Activated CD4-positive, alpha-beta memory T cell treated with anti-CD3 and anti-CD28 coated beads for 36 hours (primary cell): ENCODE measurements at regions of chr12 and their contacts with region 1.

Region 1: GRCh38 chr12:49842519-49843352 is at the start of gene BCDIN3D:
- DNase-seq: peak; percentile 97
- H3K4me3 Mint-ChIP-seq: peak within 1 kb of the TSS; percentile 90
- H3K27ac Mint-ChIP-seq: peak within 1 kb of the TSS; percentile 94
- H3K4me1 Mint-ChIP-seq: peaks cover 33% of the 10 kb centered on the region
- H3K27me3 Mint-ChIP-seq: no peaks in the 10 kb centered on the region
- total RNA-seq, gene BCDIN3D: 5.8 to 6.1 TPM

Region 2: GRCh38 chr12:49763006-49763591 is 79.6 kb before region 1 on chr12:
- CTCF ChIA-PET with region 1: interaction called, 48 read pairs
- POLR2A ChIA-PET with region 1: no interaction called
- intact Hi-C with region 1: loop called (anchors 5 kb)
- DNase-seq: peak; percentile 89
- H3K4me3 Mint-ChIP-seq: peak overlapping the region; percentile 49
- H3K27ac Mint-ChIP-seq: peak overlapping the region; percentile 95
- H3K4me1 Mint-ChIP-seq: peaks cover 59% of the 10 kb centered on the region
- H3K27me3 Mint-ChIP-seq: no peaks in the 10 kb centered on the region

Region 3: GRCh38 chr12:49828133-49829091 is 14.3 kb before region 1 on chr12 and contains the start of gene NCKAP5L:
- CTCF ChIA-PET with region 1: interaction called, 44 read pairs
- POLR2A ChIA-PET with region 1: interaction called, 10 read pairs
- intact Hi-C with region 1: loop called (anchors 1 kb)
- DNase-seq: peak; percentile 96
- H3K4me3 Mint-ChIP-seq: peak within 1 kb of the TSS; percentile 93
- H3K27ac Mint-ChIP-seq: peak within 1 kb of the TSS; percentile 88
- H3K4me1 Mint-ChIP-seq: peaks cover 20% of the 10 kb centered on the region
- H3K27me3 Mint-ChIP-seq: no peaks in the 10 kb centered on the region
- total RNA-seq, gene NCKAP5L: 2.9 to 3.0 TPM

Region 4: DNA sequence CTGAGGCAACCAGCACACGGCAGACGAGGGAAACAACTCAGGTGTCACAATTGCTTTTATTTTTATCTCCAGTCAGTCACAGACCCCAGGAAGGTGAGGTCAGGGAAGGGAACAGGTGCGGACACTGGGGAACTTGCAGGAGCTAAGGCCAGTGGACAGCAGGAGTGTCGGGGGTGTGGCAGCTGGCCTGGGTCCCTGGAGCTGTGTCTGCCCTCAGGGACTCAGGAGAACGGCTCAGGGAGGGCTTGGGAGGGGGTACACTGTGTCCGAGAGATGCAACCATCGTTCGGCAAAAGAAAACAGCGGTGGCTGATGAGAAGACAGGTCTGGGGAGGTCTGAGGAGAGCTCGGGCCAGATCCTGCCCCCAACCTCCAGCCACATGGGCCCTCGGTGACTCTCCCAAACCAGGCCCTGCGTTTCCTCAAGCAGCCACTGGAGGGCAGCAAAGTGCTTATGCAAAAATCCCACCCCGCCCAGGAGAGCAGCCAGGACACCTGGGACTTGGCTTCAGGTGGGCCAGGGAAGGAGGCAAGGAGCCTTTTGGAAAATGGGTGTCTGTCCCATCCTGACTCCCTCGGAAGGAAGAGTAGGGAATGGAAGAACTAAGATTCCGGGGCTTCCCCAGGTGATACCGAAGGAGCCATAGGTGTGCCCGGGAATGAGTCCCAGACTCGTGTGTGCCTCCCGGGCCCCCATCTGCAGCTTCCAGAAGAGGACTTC is 24.3 kb after region 1 on chr12:
- CTCF ChIA-PET with region 1: interaction called, 10 read pairs
- POLR2A ChIA-PET with region 1: no interaction called
- intact Hi-C with region 1: no loop called
- DNase-seq: peak; percentile 83
- H3K4me3 Mint-ChIP-seq: no peak overlapping the region
- H3K27ac Mint-ChIP-seq: no peak overlapping the region
- H3K4me1 Mint-ChIP-seq: no peaks in the 10 kb centered on the region
- H3K27me3 Mint-ChIP-seq: no peaks in the 10 kb centered on the region

Region 5: DNA sequence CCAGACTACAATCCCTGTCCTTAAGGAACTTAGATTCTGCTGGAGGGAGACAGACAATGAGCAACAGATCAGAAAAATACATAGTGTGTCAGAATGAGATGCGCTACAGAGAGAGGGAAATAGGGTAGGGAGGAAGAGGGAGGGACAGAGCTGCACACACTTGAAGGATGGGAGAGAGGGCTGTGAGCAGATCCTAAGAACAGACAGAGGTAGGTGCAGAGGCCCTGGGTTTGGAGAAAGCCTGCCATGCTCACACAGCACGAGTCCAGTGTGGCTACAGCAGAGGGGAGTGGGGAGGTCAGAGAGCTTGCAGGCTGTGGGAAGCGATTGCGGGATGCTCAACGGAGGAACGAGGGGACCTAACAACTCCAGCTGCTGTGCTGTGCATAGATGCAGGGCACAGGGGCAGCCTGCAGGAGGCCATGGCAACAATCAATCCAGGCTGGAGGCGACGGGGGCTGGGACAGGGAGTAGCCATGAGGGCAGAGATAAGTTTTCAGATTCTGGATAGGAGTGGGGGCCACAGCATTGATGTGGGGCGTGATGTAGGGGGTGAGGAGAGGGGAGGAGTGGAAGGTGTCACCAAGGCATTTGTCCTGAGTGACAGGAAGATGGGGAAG is 40.2 kb after region 1 on chr12:
- CTCF ChIA-PET with region 1: no interaction called
- POLR2A ChIA-PET with region 1: no interaction called
- intact Hi-C with region 1: no loop called
- DNase-seq: no peak
- H3K4me3 Mint-ChIP-seq: no peak overlapping the region
- H3K27ac Mint-ChIP-seq: no peak overlapping the region
- H3K4me1 Mint-ChIP-seq: no peaks in the 10 kb centered on the region
- H3K27me3 Mint-ChIP-seq: peaks cover 8% of the 10 kb centered on the region